Naive thymus-derived CD4-positive, alpha-beta T cell (primary cell): ENCODE measurements at regions of chr11 and their contacts with region 1.

Region 1: GRCh38 chr11:269146-269890 is 8.9 kb upstream of the NLRP6 start:
- DNase-seq: peak; percentile 43 to 95 (median 88)
- ATAC-seq: peak; percentile 84
- H3K4me3 ChIP-seq: peak overlapping the region; percentile 59
- H3K4me3 Mint-ChIP-seq: peak overlapping the region; percentile 85 to 96 (median 90)
- H3K27ac ChIP-seq: peak overlapping the region; percentile 80
- H3K27ac Mint-ChIP-seq: peak overlapping the region; percentile 92 to 100 (median 99)
- H3K4me1 ChIP-seq: peaks cover 24 to 26% of the 10 kb centered on the region in 2 donors
- H3K4me1 Mint-ChIP-seq: peaks cover 20 to 47% (median 35%) of the 10 kb centered on the region in 7 donors
- H3K27me3 ChIP-seq: no peaks in the 10 kb centered on the region
- H3K27me3 Mint-ChIP-seq: peaks cover 0 to 8% (median 0%) of the 10 kb centered on the region in 5 donors

Region 2: GRCh38 chr11:236774-237767 is 32.2 kb before region 1 on chr11 and contains the start of gene PSMD13:
- CTCF ChIA-PET with region 1: no interaction called
- POLR2A ChIA-PET with region 1: interaction called, 31 read pairs
- intact Hi-C with region 1: loop called (anchors 1 kb)
- DNase-seq: peak; percentile 82 to 92 (median 88)
- ATAC-seq: peak; percentile 88
- H3K4me3 ChIP-seq: peak within 1 kb of the TSS; percentile 100
- H3K4me3 Mint-ChIP-seq: peak within 1 kb of the TSS; percentile 84 to 99 (median 96)
- H3K27ac ChIP-seq: peak within 1 kb of the TSS; percentile 97
- H3K27ac Mint-ChIP-seq: peak within 1 kb of the TSS; percentile 84 to 100 (median 100)
- H3K4me1 ChIP-seq: peaks cover 17 to 23% of the 10 kb centered on the region in 2 donors
- H3K4me1 Mint-ChIP-seq: peaks cover 26 to 66% (median 53%) of the 10 kb centered on the region in 7 donors
- H3K27me3 ChIP-seq: no peaks in the 10 kb centered on the region
- H3K27me3 Mint-ChIP-seq: no peaks in the 10 kb centered on the region
- total RNA-seq, gene PSMD13: 64.3 to 172 (median 86.9) TPM

Region 3: DNA sequence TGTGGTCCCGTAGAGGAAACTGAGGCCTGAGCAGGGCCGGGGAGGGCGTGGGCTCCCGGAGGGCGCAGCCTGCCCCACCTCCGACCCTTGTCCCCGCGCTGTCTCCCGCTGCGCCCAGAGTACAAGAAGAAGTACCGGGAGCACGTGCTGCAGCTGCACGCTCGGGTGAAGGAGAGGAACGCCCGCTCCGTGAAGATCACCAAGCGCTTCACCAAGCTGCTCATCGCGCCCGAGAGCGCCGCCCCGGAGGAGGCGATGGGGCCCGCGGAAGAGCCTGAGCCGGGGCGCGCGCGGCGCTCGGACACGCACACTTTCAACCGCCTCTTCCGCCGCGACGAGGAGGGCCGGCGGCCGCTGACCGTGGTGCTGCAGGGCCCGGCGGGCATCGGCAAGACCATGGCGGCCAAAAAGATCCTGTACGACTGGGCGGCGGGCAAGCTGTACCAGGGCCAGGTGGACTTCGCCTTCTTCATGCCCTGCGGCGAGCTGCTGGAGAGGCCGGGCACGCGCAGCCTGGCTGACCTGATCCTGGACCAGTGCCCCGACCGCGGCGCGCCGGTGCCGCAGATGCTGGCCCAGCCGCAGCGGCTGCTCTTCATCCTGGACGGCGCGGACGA is 10.8 kb after region 1 on chr11:
- CTCF ChIA-PET with region 1: interaction called, 34 read pairs
- POLR2A ChIA-PET with region 1: interaction called, 330 read pairs
- intact Hi-C with region 1: loop called (anchors 1 kb)
- DNase-seq: peak in 6 of 9 donors; percentile 40 to 59 (median 54)
- ATAC-seq: peak; percentile 70
- H3K4me3 ChIP-seq: peak overlapping the region; percentile 52
- H3K4me3 Mint-ChIP-seq: peak overlapping the region; percentile 80 to 93 (median 89)
- H3K27ac ChIP-seq: peak overlapping the region; percentile 61
- H3K27ac Mint-ChIP-seq: peak overlapping the region in 6 of 9 donors; percentile 75 to 90 (median 82)
- H3K4me1 ChIP-seq: peaks cover 22% of the 10 kb centered on the region in 2 donors
- H3K4me1 Mint-ChIP-seq: peaks cover 37 to 67% (median 52%) of the 10 kb centered on the region in 7 donors
- H3K27me3 ChIP-seq: no peaks in the 10 kb centered on the region
- H3K27me3 Mint-ChIP-seq: peaks cover 0 to 53% (median 0%) of the 10 kb centered on the region in 5 donors

Region 4: GRCh38 chr11:304915-305843 is 35.9 kb after region 1 on chr11:
- CTCF ChIA-PET with region 1: interaction called, 3 read pairs
- POLR2A ChIA-PET with region 1: interaction called, 20 read pairs
- intact Hi-C with region 1: no loop called
- DNase-seq: peak in 6 of 9 donors; percentile 62 to 76 (median 70)
- ATAC-seq: peak; percentile 44
- H3K4me3 ChIP-seq: no peak overlapping the region
- H3K4me3 Mint-ChIP-seq: peak overlapping the region in 7 of 10 donors; percentile 0 to 55 (median 47)
- H3K27ac ChIP-seq: peak overlapping the region; percentile 95
- H3K27ac Mint-ChIP-seq: peak overlapping the region; percentile 14 to 97 (median 84)
- H3K4me1 ChIP-seq: peaks cover 21 to 24% of the 10 kb centered on the region in 2 donors
- H3K4me1 Mint-ChIP-seq: peaks cover 29 to 61% (median 48%) of the 10 kb centered on the region in 7 donors
- H3K27me3 ChIP-seq: no peaks in the 10 kb centered on the region
- H3K27me3 Mint-ChIP-seq: peaks cover 0 to 9% (median 0%) of the 10 kb centered on the region in 5 donors

Region 5: GRCh38 chr11:355581-356458 is 86.5 kb after region 1 on chr11:
- CTCF ChIA-PET with region 1: no interaction called
- POLR2A ChIA-PET with region 1: interaction called, 24 read pairs
- intact Hi-C with region 1: loop called in 1 of 2 experiments (anchors 1 kb)
- DNase-seq: peak; percentile 74 to 92 (median 90)
- ATAC-seq: peak; percentile 89
- H3K4me3 ChIP-seq: peak overlapping the region; percentile 66
- H3K4me3 Mint-ChIP-seq: peak overlapping the region in 8 of 10 donors; percentile 83 to 93 (median 88)
- H3K27ac ChIP-seq: peak overlapping the region; percentile 97
- H3K27ac Mint-ChIP-seq: peak overlapping the region in 6 of 9 donors; percentile 89 to 99 (median 98)
- H3K4me1 ChIP-seq: peaks cover 9 to 19% of the 10 kb centered on the region in 2 donors
- H3K4me1 Mint-ChIP-seq: peaks cover 29 to 45% (median 37%) of the 10 kb centered on the region in 7 donors
- H3K27me3 ChIP-seq: no peaks in the 10 kb centered on the region
- H3K27me3 Mint-ChIP-seq: peaks cover 0 to 6% (median 0%) of the 10 kb centered on the region in 5 donors

Region 6: DNA sequence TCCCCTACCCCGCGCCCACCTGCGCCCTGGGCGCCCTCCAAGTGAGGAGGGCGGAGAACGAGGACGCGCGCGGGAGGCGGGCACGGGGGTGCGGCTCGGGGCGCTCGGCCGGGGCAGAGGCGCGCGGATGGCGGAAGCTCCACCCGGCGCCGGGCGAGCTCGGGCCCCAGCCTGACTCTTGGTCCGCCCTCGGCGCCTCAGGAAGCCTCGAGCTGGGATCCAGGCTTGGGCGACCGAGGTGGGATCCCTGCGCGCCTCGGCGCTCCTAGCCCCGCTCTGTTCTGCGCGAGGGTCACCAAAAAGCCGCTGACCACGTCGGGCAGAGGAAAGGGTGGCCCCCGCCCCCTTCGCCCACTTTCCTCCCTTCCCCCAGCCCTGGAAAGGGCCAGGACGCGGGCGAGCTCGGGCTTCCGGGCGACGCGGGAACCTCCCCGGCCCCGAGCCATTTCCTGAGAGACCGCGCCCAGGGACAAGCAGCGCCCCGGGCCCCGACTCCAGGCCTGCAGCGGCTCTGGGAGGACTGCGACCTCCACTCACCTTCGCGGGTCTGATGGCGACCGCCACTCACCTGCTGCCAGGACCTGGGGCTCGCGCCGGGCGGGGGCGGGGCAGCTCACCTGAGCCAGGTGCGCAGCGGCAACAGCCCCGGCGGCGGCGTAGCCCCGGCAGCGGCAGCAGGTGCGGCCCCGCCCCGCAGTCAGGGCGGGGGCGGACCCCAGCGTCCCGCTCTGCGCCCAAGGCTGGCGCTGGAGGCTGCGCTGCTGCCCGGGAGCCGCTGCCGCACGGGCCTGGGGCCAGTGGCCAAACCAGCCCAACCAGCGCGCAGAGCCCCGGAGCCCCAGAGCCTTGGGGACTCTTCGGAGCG is 147.7 kb after region 1 on chr11:
- CTCF ChIA-PET with region 1: no interaction called
- POLR2A ChIA-PET with region 1: interaction called, 13 read pairs
- intact Hi-C with region 1: no loop called
- DNase-seq: peak; percentile 34 to 71 (median 47)
- ATAC-seq: peak; percentile 38
- H3K4me3 ChIP-seq: peak overlapping the region; percentile 92
- H3K4me3 Mint-ChIP-seq: peak overlapping the region; percentile 48 to 100 (median 96)
- H3K27ac ChIP-seq: peak overlapping the region; percentile 75
- H3K27ac Mint-ChIP-seq: peak overlapping the region in 4 of 9 donors; percentile 68 to 78 (median 70)
- H3K4me1 ChIP-seq: peaks cover 11 to 21% of the 10 kb centered on the region in 2 donors
- H3K4me1 Mint-ChIP-seq: peaks cover 10 to 37% (median 17%) of the 10 kb centered on the region in 7 donors
- H3K27me3 ChIP-seq: no peaks in the 10 kb centered on the region
- H3K27me3 Mint-ChIP-seq: no peaks in the 10 kb centered on the region